Transverse colon (tissue), 4 donors: ENCODE measurements at regions of chr9 and their contacts with region 1.

Region 1: GRCh38 chr9:94076557-94076956 is 7.7 kb upstream of the PTPDC1 start:
- DNase-seq: no peak
- H3K4me3 ChIP-seq: no peak overlapping the region
- H3K27ac ChIP-seq: no peak overlapping the region
- H3K4me1 ChIP-seq: no peaks in the 10 kb centered on the region
- H3K27me3 ChIP-seq: no peaks in the 10 kb centered on the region
- CTCF ChIP-seq: no peak
- EP300 ChIP-seq: no peak
- POLR2A ChIP-seq: no peak

Region 2: GRCh38 chr9:93814077-93814956 is 262.2 kb before region 1 on chr9:
- in situ Hi-C with region 1: no loop called
- intact Hi-C with region 1: no loop called
- DNase-seq: peak; percentile 15
- H3K4me3 ChIP-seq: no peak overlapping the region
- H3K27ac ChIP-seq: no peak overlapping the region
- H3K4me1 ChIP-seq: no peaks in the 10 kb centered on the region
- H3K27me3 ChIP-seq: no peaks in the 10 kb centered on the region
- CTCF ChIP-seq: no peak
- EP300 ChIP-seq: no peak
- POLR2A ChIP-seq: no peak

Region 3: DNA sequence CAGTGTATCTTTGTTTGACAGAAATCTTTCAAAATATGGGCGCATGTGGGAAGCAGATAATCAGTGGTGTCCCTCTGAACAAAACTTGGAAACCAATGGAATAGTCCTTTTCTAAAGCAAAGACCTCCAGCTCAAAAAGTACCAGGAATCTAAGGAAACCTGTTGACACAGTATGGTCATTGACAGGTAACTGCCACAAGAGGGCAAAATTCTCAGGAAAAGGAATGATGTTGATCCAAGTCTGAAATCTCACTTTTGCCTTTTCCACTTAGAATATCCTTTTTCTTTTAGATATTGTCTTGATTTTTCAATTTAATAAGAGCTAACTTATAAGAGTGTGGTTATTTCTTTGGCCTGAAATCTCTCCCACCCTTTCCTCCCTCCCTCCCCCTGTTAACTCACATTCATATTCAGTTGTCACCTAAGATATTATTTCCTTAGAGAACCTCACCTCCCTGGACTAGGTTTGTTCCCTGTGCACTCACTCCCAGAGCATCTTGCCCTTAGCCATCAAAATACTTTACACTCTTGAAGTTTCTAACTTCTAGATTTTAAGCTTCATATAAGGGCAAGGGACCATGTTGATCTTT is 62.4 kb before region 1 on chr9:
- in situ Hi-C with region 1: no loop called
- intact Hi-C with region 1: no loop called
- DNase-seq: no peak
- H3K4me3 ChIP-seq: no peak overlapping the region
- H3K27ac ChIP-seq: no peak overlapping the region
- H3K4me1 ChIP-seq: peaks cover 0 to 21% (median 2%) of the 10 kb centered on the region in 4 donors
- H3K27me3 ChIP-seq: no peaks in the 10 kb centered on the region
- CTCF ChIP-seq: peak; percentile 50 to 65 (median 57)
- EP300 ChIP-seq: no peak
- POLR2A ChIP-seq: no peak

Region 4: DNA sequence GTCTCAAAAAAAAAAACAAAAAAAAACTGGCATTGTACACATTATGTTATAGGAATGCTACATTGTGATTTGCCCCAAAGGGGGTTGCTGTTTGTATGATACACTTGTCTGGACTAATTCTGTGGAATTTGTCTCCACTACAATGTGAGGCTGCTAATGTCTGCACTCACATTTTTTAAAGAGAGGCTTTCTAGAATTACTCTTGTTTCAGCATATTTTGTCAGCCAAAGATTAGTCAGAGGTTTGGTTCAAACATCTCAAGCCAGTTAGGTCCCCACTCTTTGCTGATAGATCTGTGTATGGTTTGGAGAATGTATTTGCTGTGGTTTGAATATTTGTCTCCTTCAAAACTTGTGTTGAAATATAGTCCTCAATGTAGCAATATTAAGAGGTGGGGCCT is 123.2 kb after region 1 on chr9:
- in situ Hi-C with region 1: loop called in 1 of 4 experiments (anchors 10 kb)
- intact Hi-C with region 1: no loop called
- DNase-seq: no peak
- H3K4me3 ChIP-seq: no peak overlapping the region
- H3K27ac ChIP-seq: no peak overlapping the region
- H3K4me1 ChIP-seq: no peaks in the 10 kb centered on the region
- H3K27me3 ChIP-seq: no peaks in the 10 kb centered on the region
- CTCF ChIP-seq: no peak
- EP300 ChIP-seq: no peak
- POLR2A ChIP-seq: no peak